Vagina (tissue), 2 donors: ENCODE measurements at regions of chr1 and their contacts with region 1.

Region 1: GRCh38 chr1:59124166-59124565 is 172.7 kb upstream of the FGGY start:
- DNase-seq: no peak
- H3K4me3 ChIP-seq: no peak overlapping the region
- H3K27ac ChIP-seq: no peak overlapping the region
- H3K4me1 ChIP-seq: no peaks in the 10 kb centered on the region
- H3K27me3 ChIP-seq: no peaks in the 10 kb centered on the region
- CTCF ChIP-seq: no peak
- POLR2A ChIP-seq: no peak

Region 2: DNA sequence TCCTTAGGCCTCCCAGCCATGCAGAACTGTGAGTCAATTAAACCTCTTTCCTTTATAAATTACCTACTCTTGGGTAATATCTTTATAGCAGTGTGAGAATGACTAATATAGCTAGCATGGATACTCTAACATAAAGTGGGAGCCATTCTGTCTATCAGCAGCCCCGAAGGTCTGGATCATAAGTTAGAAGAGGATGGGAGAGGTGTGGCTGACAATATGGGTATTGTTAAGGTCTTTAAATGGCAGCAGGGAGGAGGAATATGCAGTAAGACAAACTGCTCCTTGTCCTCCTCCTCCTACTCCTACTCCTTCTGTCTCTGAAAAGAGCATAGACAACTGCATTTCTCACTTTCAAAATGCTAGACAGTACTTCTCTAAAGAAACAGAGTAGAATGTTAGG is 1163.4 kb after region 1 on chr1:
- intact Hi-C with region 1: loop called (anchors 5 kb)
- DNase-seq: no peak
- H3K4me3 ChIP-seq: no peak overlapping the region
- H3K27ac ChIP-seq: no peak overlapping the region
- H3K4me1 ChIP-seq: no peaks in the 10 kb centered on the region
- H3K27me3 ChIP-seq: no peaks in the 10 kb centered on the region
- CTCF ChIP-seq: no peak
- POLR2A ChIP-seq: no peak